Left colon (tissue), 2 donors: ENCODE measurements at regions of chr20 and their contacts with region 1.

Region 1: DNA sequence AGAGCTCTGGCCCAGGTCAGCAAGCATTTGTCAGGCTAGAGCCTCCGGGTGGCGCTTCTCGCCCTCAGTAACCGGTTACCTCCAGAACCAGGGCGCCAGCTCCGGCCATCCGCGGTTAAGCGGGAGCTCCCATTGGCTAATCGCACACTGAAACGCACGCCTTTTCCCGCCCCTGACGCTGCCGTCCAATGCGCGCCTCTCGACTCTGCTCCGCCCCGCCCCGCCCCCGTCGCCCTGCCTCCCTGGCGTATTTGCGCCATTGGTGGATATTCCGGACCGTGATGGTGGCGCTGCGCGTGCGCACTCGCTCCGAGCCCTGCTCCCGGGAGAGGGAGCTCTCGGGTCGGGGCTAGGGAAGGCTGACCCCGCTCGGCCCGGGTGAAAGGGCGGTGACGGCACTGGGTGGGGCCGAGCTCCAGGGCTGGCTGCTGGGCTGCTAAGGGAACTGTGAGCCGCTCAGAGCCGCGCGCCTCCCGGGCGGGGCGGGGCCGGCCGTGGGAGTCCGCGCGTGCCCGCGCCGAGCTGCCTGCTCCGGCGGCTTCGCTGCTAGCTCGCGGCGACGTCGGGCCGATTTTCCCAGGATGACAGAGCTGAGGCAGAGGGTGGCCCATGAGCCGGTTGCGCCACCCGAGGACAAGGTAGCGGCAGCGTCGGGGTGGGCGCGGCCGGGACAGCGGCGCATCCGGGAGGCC is at the start of gene CDS2:
- DNase-seq: peak; percentile 100
- ATAC-seq: peak; percentile 88
- total RNA-seq, gene CDS2: 33.4 to 42.6 TPM

Region 2: GRCh38 chr20:5191829-5192569 is 65.3 kb after region 1 on chr20:
- intact Hi-C with region 1: loop called (anchors 5 to 10 kb)
- DNase-seq: peak in 1 of 2 donors; percentile 27
- ATAC-seq: peak; percentile 89

Region 3: GRCh38 chr20:5557123-5557522 is 430.5 kb after region 1 on chr20:
- intact Hi-C with region 1: no loop called
- DNase-seq: peak in 1 of 2 donors; percentile 66
- ATAC-seq: peak; percentile 71